ENCODE measurements at regions of chr18 and their contacts with region 1.

Region 1: DNA sequence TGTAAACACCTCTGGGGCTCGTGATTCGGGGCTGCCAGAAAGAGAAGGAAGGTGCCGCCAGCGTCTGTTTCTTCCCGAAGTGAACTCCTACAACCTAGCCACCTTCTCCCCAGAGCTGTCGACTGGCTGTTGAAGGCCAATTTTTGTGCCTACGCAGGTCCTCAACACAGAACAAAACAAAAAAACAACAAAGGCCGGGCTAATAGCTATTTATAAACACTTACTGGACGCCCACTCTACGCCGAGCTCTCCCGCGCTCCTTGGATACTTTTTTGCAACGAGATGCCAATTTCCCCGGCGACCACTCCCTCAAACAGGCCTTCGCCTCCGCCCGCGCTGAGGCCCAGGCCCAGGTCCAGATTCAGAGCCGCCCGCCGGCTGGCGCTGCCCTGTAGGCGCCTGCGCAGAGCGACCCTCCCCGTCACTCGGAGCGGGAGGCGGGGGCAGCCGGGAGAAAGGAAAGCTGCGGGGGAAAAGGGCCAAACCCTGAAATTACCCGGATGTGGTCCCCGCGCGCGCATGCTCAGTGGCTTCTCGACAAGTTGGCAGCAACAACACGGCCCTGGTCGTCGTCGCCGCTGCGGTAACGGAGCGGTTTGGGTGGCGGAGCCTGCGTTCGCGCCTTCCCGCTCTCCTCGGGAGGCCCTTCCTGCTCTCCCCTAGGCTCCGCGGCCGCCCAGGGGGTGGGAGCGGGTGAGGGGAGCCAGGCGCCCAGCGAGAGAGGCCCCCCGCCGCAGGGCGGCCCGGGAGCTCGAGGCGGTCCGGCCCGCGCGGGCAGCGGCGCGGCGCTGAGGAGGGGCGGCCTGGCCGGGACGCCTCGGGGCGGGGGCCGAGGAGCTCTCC is at the start of gene SMAD4:
- DNase-seq: peak; percentile 98 to 100
- ATAC-seq: peak; percentile 98
- H3K4me3 ChIP-seq: peak within 1 kb of the TSS; percentile 88 to 95
- H3K27ac ChIP-seq: peak within 1 kb of the TSS; percentile 96 to 99
- H3K4me1 ChIP-seq: peaks cover 3 to 4% of the 10 kb centered on the region in 2 donors
- H3K27me3 ChIP-seq: no peaks in the 10 kb centered on the region
- total RNA-seq, gene SMAD4: 109 to 136 TPM

Region 2: GRCh38 chr18:50878345-50879301 is 151.3 kb before region 1 on chr18 and contains the start of gene ME2:
- intact Hi-C with region 1: loop called in 1 of 2 experiments (anchors 2 kb)
- DNase-seq: peak; percentile 95 to 97
- ATAC-seq: peak; percentile 100
- H3K4me3 ChIP-seq: peak within 1 kb of the TSS; percentile 87 to 88
- H3K27ac ChIP-seq: peak within 1 kb of the TSS; percentile 33 to 72
- H3K4me1 ChIP-seq: peaks cover 2 to 5% of the 10 kb centered on the region in 2 donors
- H3K27me3 ChIP-seq: no peaks in the 10 kb centered on the region
- total RNA-seq, gene ME2: 35.2 TPM

Region 3: GRCh38 chr18:50967714-50968661 is 61.9 kb before region 1 on chr18 and contains the start of gene ELAC1:
- intact Hi-C with region 1: loop called (anchors 2 to 5 kb)
- DNase-seq: peak; percentile 83 to 91
- ATAC-seq: peak; percentile 98
- H3K4me3 ChIP-seq: peak within 1 kb of the TSS; percentile 79 to 94
- H3K27ac ChIP-seq: peak within 1 kb of the TSS; percentile 85 to 99
- H3K4me1 ChIP-seq: peaks cover 0 to 7% of the 10 kb centered on the region in 2 donors
- H3K27me3 ChIP-seq: no peaks in the 10 kb centered on the region
- total RNA-seq, gene ELAC1: 5.1 to 7.3 TPM

Region 4: DNA sequence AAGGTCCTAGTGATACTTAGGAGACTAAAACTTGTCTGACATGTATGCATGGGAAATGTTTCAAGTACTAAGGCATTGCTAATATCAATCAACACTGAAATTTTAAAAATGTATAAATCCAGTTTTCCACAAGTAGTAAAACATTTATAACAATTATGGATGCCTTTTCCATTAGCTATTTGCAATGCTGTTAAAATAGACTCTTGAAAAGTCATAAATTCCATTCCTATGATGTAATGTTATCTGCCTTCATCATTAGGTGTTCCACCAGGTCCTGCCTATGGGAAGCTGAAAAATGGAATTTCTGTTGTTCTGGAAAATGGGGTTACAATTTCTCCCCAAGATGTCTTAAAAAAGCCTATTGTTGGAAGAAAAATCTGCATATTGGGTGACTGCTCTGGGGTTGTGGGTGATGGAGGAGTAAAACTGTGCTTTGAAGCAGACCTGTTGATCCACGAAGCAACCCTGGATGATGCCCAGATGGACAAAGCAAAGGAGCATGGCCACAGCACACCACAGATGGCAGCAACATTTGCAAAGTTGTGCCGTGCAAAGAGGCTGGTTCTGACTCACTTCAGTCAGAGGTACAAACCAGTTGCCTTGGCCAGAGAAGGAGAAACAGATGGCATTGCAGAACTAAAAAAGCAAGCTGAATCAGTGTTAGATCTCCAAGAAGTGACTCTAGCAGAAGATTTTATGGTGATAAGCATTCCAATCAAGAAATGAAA is 43.4 kb before region 1 on chr18:
- intact Hi-C with region 1: loop called (anchors 5 kb)
- DNase-seq: no peak
- ATAC-seq: no peak
- H3K4me3 ChIP-seq: no peak overlapping the region
- H3K27ac ChIP-seq: peak overlapping the region in 1 of 2 donors; percentile 58
- H3K4me1 ChIP-seq: no peaks in the 10 kb centered on the region
- H3K27me3 ChIP-seq: no peaks in the 10 kb centered on the region

Region 5: GRCh38 chr18:51197661-51198424 is 167.9 kb after region 1 on chr18 and contains the start of gene MEX3C:
- intact Hi-C with region 1: loop called (anchors 2 to 5 kb)
- DNase-seq: peak; percentile 100
- ATAC-seq: peak; percentile 98
- H3K4me3 ChIP-seq: peak within 1 kb of the TSS; percentile 72 to 74
- H3K27ac ChIP-seq: peak within 1 kb of the TSS; percentile 83 to 97
- H3K4me1 ChIP-seq: no peaks in the 10 kb centered on the region
- H3K27me3 ChIP-seq: no peaks in the 10 kb centered on the region
- total RNA-seq, gene MEX3C: 30.9 to 31.7 TPM